H1 (cell line): ENCODE measurements at regions of chr4 and their contacts with region 1.

Region 1: GRCh38 chr4:143346206-143346605 is 9.5 kb downstream of the GAB1 start:
- DNase-seq: no peak
- H3K4me3 ChIP-seq: no peak overlapping the region
- H3K27ac ChIP-seq: no peak overlapping the region
- H3K4me1 ChIP-seq: peaks cover 0 to 3% (median under 1%) of the 10 kb centered on the region in 4 experiments; a peak in 4 of 7 replicates
- H3K27me3 ChIP-seq: no peaks in the 10 kb centered on the region
- CTCF ChIP-seq: no peak
- EP300 ChIP-seq: no peak
- POLR2A ChIP-seq: no peak
- RAD21 ChIP-seq: no peak

Region 2: GRCh38 chr4:143241892-143242291 is 104.3 kb before region 1 on chr4:
- CTCF ChIA-PET with region 1: no interaction called
- POLR2A ChIA-PET with region 1: no interaction called
- DNase-seq: no peak
- H3K4me3 ChIP-seq: no peak overlapping the region
- H3K27ac ChIP-seq: no peak overlapping the region
- H3K4me1 ChIP-seq: no peaks in the 10 kb centered on the region
- H3K27me3 ChIP-seq: no peaks in the 10 kb centered on the region
- CTCF ChIP-seq: no peak
- EP300 ChIP-seq: no peak
- POLR2A ChIP-seq: no peak
- RAD21 ChIP-seq: no peak

Region 3: DNA sequence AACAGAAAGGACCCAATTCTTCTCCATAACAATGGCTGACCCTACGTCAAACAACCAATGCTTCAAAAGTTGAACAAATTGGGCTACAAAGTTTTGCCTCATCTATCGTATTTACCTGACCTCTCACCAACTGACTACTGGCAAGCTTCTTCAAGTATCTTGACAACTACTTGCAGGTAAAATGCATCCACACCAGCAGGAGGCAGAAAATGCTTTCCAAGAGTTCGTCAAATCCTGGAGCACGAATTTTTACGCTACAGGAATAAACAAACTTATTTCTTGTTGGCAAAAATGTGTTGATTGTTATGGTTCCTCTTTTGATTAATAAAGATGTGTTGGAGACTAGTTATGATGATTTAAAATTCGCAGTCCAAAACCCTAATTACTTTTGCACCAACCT is 16.2 kb before region 1 on chr4:
- CTCF ChIA-PET with region 1: interaction called, 10 read pairs
- POLR2A ChIA-PET with region 1: no interaction called
- DNase-seq: no peak
- H3K4me3 ChIP-seq: no peak overlapping the region
- H3K27ac ChIP-seq: no peak overlapping the region
- H3K4me1 ChIP-seq: no peaks in the 10 kb centered on the region
- H3K27me3 ChIP-seq: no peaks in the 10 kb centered on the region
- CTCF ChIP-seq: peak in 1 of 3 experiments; percentile 45; a peak in 2 of 4 replicates
- EP300 ChIP-seq: no peak
- POLR2A ChIP-seq: no peak
- RAD21 ChIP-seq: peak; percentile 42 to 47

Region 4: GRCh38 chr4:143335979-143336780 is 10.0 kb before region 1 on chr4:
- CTCF ChIA-PET with region 1: interaction called, 10 read pairs
- POLR2A ChIA-PET with region 1: interaction called, 10 read pairs
- DNase-seq: peak; percentile 88 to 90
- H3K4me3 ChIP-seq: peak overlapping the region; percentile 77 to 92 (median 86)
- H3K27ac ChIP-seq: peak overlapping the region; percentile 78
- H3K4me1 ChIP-seq: peaks cover 0 to 4% (median 2%) of the 10 kb centered on the region in 4 experiments; a peak in 3 of 7 replicates
- H3K27me3 ChIP-seq: no peaks in the 10 kb centered on the region
- CTCF ChIP-seq: no peak
- EP300 ChIP-seq: 0 out of 3 replicates have a peak, but pooled peaks of 1 of the 2 experiments have one; percentile 8
- POLR2A ChIP-seq: peak; percentile 82 to 88
- RAD21 ChIP-seq: 0 out of 4 replicates have a peak, but pooled peaks of 1 of the 2 experiments have one; percentile 3

Region 5: DNA sequence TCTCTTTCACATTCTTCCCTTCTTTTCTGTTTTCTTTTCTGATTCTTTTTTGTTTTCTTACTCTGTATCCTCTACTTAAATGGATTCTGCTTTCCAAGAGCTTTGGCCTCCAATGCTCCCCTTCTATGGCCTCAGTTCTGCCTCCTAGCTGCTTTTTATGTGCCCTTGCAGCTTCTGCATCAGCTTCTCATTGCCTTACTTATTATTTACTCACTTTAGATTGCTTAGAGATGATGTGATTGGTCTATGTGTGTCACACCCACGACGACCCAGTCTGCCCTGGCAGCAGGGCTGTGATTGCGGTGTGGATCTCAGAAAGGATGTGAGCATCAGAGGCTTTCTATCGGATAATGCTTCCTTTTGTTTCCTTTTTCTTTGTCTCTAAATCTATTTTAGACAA is 95.5 kb after region 1 on chr4:
- CTCF ChIA-PET with region 1: no interaction called
- POLR2A ChIA-PET with region 1: no interaction called
- DNase-seq: no peak
- H3K4me3 ChIP-seq: no peak overlapping the region
- H3K27ac ChIP-seq: no peak overlapping the region
- H3K4me1 ChIP-seq: no peaks in the 10 kb centered on the region
- H3K27me3 ChIP-seq: no peaks in the 10 kb centered on the region
- CTCF ChIP-seq: no peak; a peak in 1 of 4 replicates
- EP300 ChIP-seq: no peak
- POLR2A ChIP-seq: no peak
- RAD21 ChIP-seq: no peak